T-cell (primary cell): ENCODE measurements at regions of chr6 and their contacts with region 1.

Region 1: DNA sequence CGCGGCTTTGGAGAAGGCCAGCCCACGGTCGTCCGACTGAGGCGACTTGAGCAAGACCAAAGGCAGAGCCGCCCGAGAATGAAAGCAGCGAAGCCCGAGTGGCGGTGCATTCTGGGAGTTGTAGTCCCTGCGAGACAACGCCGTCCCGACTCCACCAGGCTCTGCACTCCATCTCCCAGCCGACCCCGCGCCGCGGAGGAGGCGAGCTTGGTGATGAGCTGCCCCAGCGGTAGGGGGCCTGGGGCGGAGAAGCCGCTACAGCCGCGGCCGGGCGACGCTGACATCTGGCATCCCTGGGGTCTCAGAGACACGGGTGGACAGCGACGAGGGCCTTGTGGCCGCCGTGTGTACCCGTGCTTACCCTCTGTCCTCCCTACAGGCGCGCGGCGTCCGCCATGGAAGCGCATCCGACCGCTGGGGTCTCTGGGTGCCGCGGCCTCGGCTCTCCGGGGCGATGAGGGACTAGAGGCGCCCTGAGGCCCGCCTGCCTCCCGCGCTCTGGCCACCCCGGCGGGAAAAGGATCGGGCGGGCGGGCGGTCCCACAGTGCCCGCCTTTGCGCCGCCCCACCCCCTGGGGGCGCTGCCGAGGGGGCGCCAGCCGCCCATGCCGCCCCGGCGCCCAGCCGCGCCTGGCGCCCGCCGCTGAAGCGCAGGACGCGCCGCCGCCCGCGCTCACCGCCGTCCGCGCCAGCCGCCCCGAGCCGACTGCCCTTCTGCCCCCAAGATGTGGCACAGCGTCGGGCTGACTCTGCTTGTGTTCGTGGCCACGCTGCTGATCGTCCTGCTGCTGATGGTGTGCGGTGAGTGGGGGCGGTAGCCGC is at the start of gene SMIM13:
- DNase-seq: peak; percentile 87 to 97 (median 94)
- ATAC-seq: peak; percentile 93 to 96 (median 94)
- H3K4me3 ChIP-seq: peak within 1 kb of the TSS; percentile 94 to 96
- H3K4me3 Mint-ChIP-seq: peak within 1 kb of the TSS; percentile 96 to 98 (median 96)
- H3K27ac ChIP-seq: peak within 1 kb of the TSS; percentile 88
- H3K27ac Mint-ChIP-seq: peak within 1 kb of the TSS; percentile 97 to 99
- H3K4me1 ChIP-seq: peaks cover 10 to 20% of the 10 kb centered on the region in 2 experiments
- H3K4me1 Mint-ChIP-seq: peaks cover 30 to 35% (median 33%) of the 10 kb centered on the region in 3 donors
- H3K27me3 ChIP-seq: no peaks in the 10 kb centered on the region
- H3K27me3 Mint-ChIP-seq: no peaks in the 10 kb centered on the region
- total RNA-seq, gene SMIM13: 3.6 to 8.0 (median 5.3) TPM

Region 2: DNA sequence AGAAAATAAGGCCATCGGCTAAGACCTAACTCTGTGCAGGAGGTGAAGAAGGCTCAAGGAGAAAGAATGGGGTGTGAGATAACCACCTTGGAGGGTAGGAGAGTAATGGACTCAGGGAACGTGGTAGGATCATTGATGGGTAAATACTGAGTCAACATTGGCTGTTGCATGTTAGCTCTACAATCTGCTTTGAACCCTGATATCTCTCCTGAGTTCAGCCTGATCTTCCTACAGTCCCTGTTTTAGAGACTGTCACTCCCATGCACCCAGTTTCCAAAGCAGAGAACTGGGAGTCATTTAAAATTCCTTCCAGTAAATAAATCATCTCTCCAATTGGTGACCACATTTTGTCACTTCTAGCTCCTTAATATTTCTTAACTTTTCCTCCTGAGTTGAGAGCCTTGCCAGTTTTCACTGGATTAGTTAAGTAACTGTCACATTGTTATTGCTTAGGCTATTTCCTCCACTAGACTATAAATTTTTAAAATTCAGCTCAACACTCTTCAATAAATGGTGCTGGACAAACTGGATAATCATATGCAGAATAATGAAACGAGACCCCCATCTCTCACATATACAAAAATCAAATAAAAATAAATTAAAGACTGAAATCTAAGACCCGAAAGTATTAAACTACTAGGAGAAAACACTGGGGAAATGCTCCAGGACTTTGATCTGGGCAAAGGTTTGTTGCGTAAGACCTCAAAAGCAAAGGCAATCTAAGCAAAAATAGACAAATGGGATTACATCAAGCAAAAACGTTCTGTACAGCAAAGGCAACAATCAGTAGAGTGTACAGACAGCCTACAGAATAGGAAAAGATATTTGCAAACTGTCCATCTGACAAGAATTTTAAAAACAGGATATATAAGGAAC is 304.9 kb after region 1 on chr6:
- CTCF ChIA-PET with region 1: no interaction called
- POLR2A ChIA-PET with region 1: interaction called in 1 of 2 experiments, 13 read pairs
- DNase-seq: no peak
- ATAC-seq: no peak
- H3K4me3 ChIP-seq: no peak overlapping the region
- H3K4me3 Mint-ChIP-seq: no peak overlapping the region
- H3K27ac ChIP-seq: no peak overlapping the region
- H3K27ac Mint-ChIP-seq: peak overlapping the region in 1 of 2 donors; percentile 8
- H3K4me1 ChIP-seq: no peaks in the 10 kb centered on the region
- H3K4me1 Mint-ChIP-seq: peaks cover 0 to 2% (median 0%) of the 10 kb centered on the region in 3 donors
- H3K27me3 ChIP-seq: no peaks in the 10 kb centered on the region
- H3K27me3 Mint-ChIP-seq: peaks cover 0 to 4% of the 10 kb centered on the region in 2 donors